IMR-90 (cell line): ENCODE measurements at regions of chr4 and their contacts with region 1.

Region 1: GRCh38 chr4:39638354-39639240 is at the start of gene SMIM14:
- DNase-seq: peak; percentile 98
- ATAC-seq: peak; percentile 96
- H3K4me3 ChIP-seq: peak within 1 kb of the TSS; percentile 87
- H3K27ac ChIP-seq: peak within 1 kb of the TSS; percentile 88
- H3K4me1 ChIP-seq: no peaks in the 10 kb centered on the region; the same call in 1 of the 2 replicates
- H3K27me3 ChIP-seq: no peaks in the 10 kb centered on the region
- CTCF ChIP-seq: no peak
- POLR2A ChIP-seq: peak; percentile 98
- RAD21 ChIP-seq: peak; percentile 26; the same call in 1 of the 2 replicates
- total RNA-seq, gene SMIM14: 15.6 and 30.8 TPM in 2 replicates

Region 2: GRCh38 chr4:39044364-39044955 is 594.1 kb before region 1 on chr4:
- CTCF ChIA-PET with region 1: no interaction called
- POLR2A ChIA-PET with region 1: no interaction called
- dilution Hi-C with region 1: no loop called
- in situ Hi-C with region 1: no loop called
- intact Hi-C with region 1: no loop called
- DNase-seq: peak; percentile 93
- ATAC-seq: peak; percentile 82
- H3K4me3 ChIP-seq: peak overlapping the region; percentile 93
- H3K27ac ChIP-seq: peak overlapping the region; percentile 98
- H3K4me1 ChIP-seq: peaks cover 20% of the 10 kb centered on the region
- H3K27me3 ChIP-seq: no peaks in the 10 kb centered on the region
- CTCF ChIP-seq: no peak
- POLR2A ChIP-seq: 0 out of 2 replicates have a peak, but pooled peaks have one; percentile 48
- RAD21 ChIP-seq: no peak

Region 3: DNA sequence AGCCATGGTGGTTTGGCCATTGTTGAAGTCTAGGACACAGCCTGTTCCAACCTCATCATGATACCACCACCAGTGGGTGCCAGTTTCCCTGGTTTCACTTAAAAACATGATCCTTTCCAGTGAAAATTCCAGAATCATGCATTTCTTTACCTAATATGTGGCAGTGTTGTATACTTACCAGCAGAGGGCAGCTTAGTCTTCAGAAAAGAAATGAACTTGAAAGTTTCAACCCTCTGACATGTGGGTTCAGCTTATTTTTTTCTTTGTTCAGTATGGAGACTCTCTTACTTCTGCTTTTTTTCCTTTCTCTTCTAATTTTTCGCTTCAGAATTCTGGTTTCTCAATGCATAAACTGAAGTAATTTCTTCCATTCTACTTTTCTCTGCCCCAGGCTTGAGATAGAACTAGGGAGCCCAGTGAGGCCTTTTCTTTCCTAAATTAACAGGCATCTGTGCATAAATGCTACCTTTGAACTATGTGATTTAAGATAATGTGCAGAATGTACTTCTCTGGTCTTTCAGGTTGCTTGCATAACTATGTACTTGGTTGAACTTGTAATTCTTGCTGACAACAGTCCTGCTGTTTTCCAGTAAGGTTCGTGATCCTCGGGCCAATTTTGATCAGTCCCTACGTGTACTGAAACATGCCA is 169.0 kb before region 1 on chr4:
- CTCF ChIA-PET with region 1: interaction called, 9 read pairs
- POLR2A ChIA-PET with region 1: no interaction called
- dilution Hi-C with region 1: no loop called
- in situ Hi-C with region 1: no loop called
- intact Hi-C with region 1: loop called (anchors 1 kb)
- DNase-seq: peak; percentile 87
- ATAC-seq: peak; percentile 83
- H3K4me3 ChIP-seq: no peak overlapping the region
- H3K27ac ChIP-seq: no peak overlapping the region
- H3K4me1 ChIP-seq: no peaks in the 10 kb centered on the region
- H3K27me3 ChIP-seq: no peaks in the 10 kb centered on the region
- CTCF ChIP-seq: peak; percentile 97
- POLR2A ChIP-seq: no peak
- RAD21 ChIP-seq: peak; percentile 87

Region 4: DNA sequence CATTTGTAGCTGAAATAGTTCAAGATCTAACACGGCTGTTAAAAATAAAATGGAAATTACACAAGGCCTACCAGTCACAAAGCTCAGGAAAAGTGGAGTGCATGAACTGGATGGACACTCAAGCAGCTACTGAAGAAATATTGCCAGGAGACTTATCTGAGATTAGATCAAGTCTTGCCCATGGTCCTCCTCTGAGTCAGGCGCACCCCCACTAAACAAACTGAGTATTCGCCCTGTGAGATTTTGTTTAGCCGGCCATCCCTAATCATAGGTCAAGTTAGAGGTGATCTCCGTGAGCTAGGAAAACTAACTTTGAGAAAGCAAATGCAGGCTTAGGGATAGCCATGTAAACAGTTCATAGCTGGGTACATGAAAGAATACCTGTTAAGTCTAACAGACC is 150.0 kb before region 1 on chr4:
- CTCF ChIA-PET with region 1: no interaction called
- POLR2A ChIA-PET with region 1: no interaction called
- dilution Hi-C with region 1: no loop called
- in situ Hi-C with region 1: no loop called
- intact Hi-C with region 1: no loop called
- DNase-seq: no peak
- ATAC-seq: no peak
- H3K4me3 ChIP-seq: no peak overlapping the region
- H3K27ac ChIP-seq: no peak overlapping the region
- H3K4me1 ChIP-seq: no peaks in the 10 kb centered on the region
- H3K27me3 ChIP-seq: no peaks in the 10 kb centered on the region
- CTCF ChIP-seq: no peak
- POLR2A ChIP-seq: no peak
- RAD21 ChIP-seq: no peak

Region 5: GRCh38 chr4:39514888-39515401 is 123.7 kb before region 1 on chr4:
- CTCF ChIA-PET with region 1: no interaction called
- POLR2A ChIA-PET with region 1: interaction called, 15 read pairs
- dilution Hi-C with region 1: no loop called
- in situ Hi-C with region 1: loop called (anchors 10 kb)
- intact Hi-C with region 1: no loop called
- DNase-seq: peak; percentile 66
- ATAC-seq: peak; percentile 75
- H3K4me3 ChIP-seq: no peak overlapping the region
- H3K27ac ChIP-seq: peak overlapping the region; percentile 85; the same call in 1 of the 2 replicates
- H3K4me1 ChIP-seq: peaks cover 5% of the 10 kb centered on the region
- H3K27me3 ChIP-seq: no peaks in the 10 kb centered on the region
- CTCF ChIP-seq: no peak
- POLR2A ChIP-seq: no peak
- RAD21 ChIP-seq: no peak

Region 6: GRCh38 chr4:39621582-39621981 is 17.0 kb before region 1 on chr4:
- CTCF ChIA-PET with region 1: interaction called, 3 read pairs
- POLR2A ChIA-PET with region 1: interaction called, 3 read pairs
- dilution Hi-C with region 1: no loop called
- in situ Hi-C with region 1: no loop called
- intact Hi-C with region 1: loop called (anchors 2 kb)
- DNase-seq: peak; percentile 81
- ATAC-seq: peak; percentile 76
- H3K4me3 ChIP-seq: no peak overlapping the region
- H3K27ac ChIP-seq: peak overlapping the region; percentile 65
- H3K4me1 ChIP-seq: peaks cover 6% of the 10 kb centered on the region
- H3K27me3 ChIP-seq: no peaks in the 10 kb centered on the region
- CTCF ChIP-seq: no peak
- POLR2A ChIP-seq: no peak
- RAD21 ChIP-seq: no peak

Region 7: GRCh38 chr4:39977489-39978377 is 339.1 kb after region 1 on chr4 and contains the start of gene PDS5A:
- CTCF ChIA-PET with region 1: no interaction called
- POLR2A ChIA-PET with region 1: no interaction called
- dilution Hi-C with region 1: no loop called
- in situ Hi-C with region 1: no loop called
- intact Hi-C with region 1: loop called (anchors 2 kb)
- DNase-seq: peak; percentile 84
- ATAC-seq: peak; percentile 89
- H3K4me3 ChIP-seq: peak within 1 kb of the TSS; percentile 96
- H3K27ac ChIP-seq: peak within 1 kb of the TSS; percentile 91
- H3K4me1 ChIP-seq: peaks cover 2% of the 10 kb centered on the region
- H3K27me3 ChIP-seq: no peaks in the 10 kb centered on the region
- CTCF ChIP-seq: peak; percentile 99
- POLR2A ChIP-seq: peak; percentile 62
- RAD21 ChIP-seq: peak; percentile 71
- total RNA-seq, gene PDS5A: 33.5 and 53.0 TPM in 2 replicates